Caco-2 (cell line): ENCODE measurements at regions of chr11 and their contacts with region 1.

Region 1: DNA sequence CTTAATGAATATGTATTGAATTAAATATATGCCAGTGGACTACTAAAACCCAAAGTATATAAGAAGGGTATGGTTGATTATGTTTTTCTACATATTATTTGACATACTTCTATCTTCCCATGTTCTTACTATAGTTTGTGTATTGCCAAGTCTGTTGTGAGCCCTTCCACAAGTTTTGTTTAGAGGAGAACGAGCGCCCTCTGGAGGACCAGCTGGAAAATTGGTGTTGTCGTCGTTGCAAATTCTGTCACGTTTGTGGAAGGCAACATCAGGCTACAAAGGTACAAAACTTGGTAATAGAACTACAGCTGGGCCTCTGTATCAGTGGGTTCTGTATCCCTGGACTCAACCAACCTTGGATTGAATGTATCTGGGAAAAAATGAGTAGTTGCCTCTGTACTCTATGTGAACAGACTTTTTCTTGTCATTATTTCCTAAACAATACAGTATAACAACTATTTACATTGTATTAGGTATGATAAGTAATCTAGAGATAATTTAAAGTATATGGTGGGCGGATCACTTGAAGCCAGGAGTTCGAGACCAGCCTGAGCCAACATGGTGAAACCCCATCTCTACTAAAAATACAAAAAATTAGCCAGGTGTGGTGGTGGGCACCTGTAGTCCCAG is 38.7 kb upstream of the TTC36 start:
- DNase-seq: peak; percentile 76 to 84
- H3K4me3 ChIP-seq: no peak overlapping the region
- H3K4me3 Mint-ChIP-seq: no peak overlapping the region
- H3K27ac Mint-ChIP-seq: no peak overlapping the region
- H3K4me1 ChIP-seq: no peaks in the 10 kb centered on the region
- H3K4me1 Mint-ChIP-seq: no peaks in the 10 kb centered on the region
- H3K27me3 ChIP-seq: no peaks in the 10 kb centered on the region
- H3K27me3 Mint-ChIP-seq: no peaks in the 10 kb centered on the region
- CTCF ChIP-seq: peak; percentile 97

Region 2: DNA sequence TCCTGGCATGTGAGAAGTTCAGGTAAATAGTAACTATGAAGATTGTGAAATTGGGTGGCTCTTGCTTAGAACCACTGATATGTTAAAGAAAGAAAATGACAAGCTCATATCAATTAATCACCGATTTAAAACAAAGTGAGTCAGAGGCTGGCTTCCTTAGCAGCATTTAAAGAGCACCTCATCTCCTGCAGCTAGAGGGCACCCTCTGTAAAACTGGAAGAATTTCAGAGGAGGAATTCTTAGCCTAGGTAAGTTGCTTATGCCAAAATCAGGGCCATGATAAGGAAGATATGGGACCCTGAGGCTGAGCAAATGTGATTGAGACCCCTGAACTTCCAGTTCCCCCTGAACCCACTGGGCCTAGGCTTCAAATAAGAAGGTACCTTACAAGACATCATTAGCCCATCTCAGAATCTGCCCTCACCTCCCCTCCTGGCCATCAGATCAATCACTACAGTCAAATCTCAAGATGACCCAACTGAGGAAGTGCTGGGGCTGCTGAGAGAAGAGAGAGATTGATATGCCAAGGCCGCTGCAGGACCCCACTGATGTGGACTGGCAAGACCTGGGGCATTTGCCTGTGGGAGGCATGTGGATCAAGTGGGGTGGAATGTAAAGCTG is 192.7 kb before region 1 on chr11:
- CTCF ChIA-PET with region 1: no interaction called
- POLR2A ChIA-PET with region 1: no interaction called
- intact Hi-C with region 1: loop called (anchors 2 kb)
- DNase-seq: peak; percentile 63 to 69
- H3K4me3 ChIP-seq: no peak overlapping the region
- H3K4me3 Mint-ChIP-seq: no peak overlapping the region
- H3K27ac Mint-ChIP-seq: peak overlapping the region; percentile 14
- H3K4me1 ChIP-seq: peaks cover 9% of the 10 kb centered on the region
- H3K4me1 Mint-ChIP-seq: peaks cover 18% of the 10 kb centered on the region
- H3K27me3 ChIP-seq: no peaks in the 10 kb centered on the region
- H3K27me3 Mint-ChIP-seq: no peaks in the 10 kb centered on the region
- CTCF ChIP-seq: peak; percentile 73 to 86

Region 3: DNA sequence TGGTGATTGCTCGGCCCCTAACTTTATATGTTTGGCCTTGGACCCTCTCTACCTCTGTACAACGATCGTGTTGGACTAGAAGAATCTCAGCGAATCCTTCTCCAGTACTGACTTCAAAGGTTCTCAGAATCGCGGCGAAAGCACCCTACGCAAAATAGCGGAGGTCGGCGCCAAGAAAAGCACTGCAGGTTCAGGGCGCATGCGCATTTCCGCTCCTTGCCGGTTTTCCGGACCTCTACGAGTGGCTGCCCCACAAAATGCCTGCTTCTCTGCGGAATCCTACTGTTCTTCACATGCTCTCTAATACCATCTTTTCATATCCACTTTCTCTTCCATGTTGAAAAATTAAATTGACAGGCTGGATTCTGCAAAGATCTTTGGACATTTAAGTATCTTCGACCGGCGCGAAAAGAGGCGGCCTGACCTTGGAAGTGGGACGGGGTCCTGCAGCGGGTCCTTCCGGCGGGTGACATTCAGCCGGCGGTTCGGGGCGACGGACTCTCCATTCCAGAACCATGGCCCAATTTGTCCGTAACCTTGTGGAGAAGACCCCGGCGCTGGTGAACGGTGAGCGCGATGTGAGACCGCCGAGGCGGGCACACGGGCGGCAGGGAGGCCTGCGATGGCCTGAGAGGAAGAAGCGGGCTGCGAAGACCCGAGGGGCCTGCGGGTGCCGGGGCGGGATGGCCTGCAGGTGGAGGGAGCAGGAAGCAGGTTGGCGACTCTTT is 87.3 kb before region 1 on chr11 and contains the start of gene ATP5MG:
- CTCF ChIA-PET with region 1: interaction called, 5 read pairs
- POLR2A ChIA-PET with region 1: no interaction called
- intact Hi-C with region 1: loop called (anchors 1 kb)
- DNase-seq: peak; percentile 94 to 95
- H3K4me3 ChIP-seq: peak within 1 kb of the TSS; percentile 69
- H3K4me3 Mint-ChIP-seq: peak within 1 kb of the TSS; percentile 91
- H3K27ac Mint-ChIP-seq: peak within 1 kb of the TSS; percentile 95
- H3K4me1 ChIP-seq: peaks cover 12% of the 10 kb centered on the region
- H3K4me1 Mint-ChIP-seq: peaks cover 39% of the 10 kb centered on the region
- H3K27me3 ChIP-seq: no peaks in the 10 kb centered on the region
- H3K27me3 Mint-ChIP-seq: no peaks in the 10 kb centered on the region
- CTCF ChIP-seq: peak in 1 of 2 experiments; percentile 60
- total RNA-seq, gene ATP5MG: 537 and 576 TPM in 2 replicates

Region 4: DNA sequence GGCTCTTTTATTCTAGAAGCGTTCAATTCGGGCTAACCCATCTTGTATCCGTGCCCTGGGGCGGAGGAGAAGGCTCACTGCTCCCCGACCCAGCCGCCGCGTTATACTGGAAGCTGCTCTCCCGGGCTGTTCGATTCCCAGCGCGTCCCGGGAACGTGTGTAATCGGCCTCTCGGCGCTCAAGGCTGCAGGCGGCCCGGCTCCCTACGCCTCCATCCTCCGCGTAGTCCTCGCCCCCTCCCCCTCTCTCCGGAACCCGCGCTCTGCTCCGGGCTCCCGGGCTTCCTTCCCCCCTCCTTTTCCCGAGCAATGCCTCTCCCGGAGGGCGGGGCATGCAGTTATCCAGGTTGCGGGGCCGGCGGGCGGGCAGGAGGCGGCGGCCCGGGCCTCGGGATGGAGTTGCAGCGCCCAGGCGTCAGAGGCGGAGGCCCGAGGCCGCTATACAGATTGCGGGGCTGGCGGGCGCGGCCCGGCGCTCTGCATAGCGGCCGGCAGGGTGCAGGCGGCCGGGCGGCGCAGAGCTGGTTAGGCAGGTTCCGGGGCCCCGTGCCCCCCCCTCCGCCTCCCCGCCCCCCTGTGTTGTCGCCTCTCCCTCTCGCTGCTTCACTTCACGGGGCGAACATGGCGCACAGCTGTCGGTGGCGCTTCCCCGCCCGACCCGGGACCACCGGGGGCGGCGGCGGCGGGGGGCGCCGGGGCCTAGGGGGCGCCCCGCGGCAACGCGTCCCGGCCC is 52.5 kb before region 1 on chr11 and contains the start of gene KMT2A:
- CTCF ChIA-PET with region 1: no interaction called
- POLR2A ChIA-PET with region 1: no interaction called
- intact Hi-C with region 1: loop called (anchors 1 kb)
- DNase-seq: peak; percentile 100
- H3K4me3 ChIP-seq: peak within 1 kb of the TSS; percentile 97
- H3K4me3 Mint-ChIP-seq: peak within 1 kb of the TSS; percentile 82
- H3K27ac Mint-ChIP-seq: peak within 1 kb of the TSS; percentile 88
- H3K4me1 ChIP-seq: peaks cover 24% of the 10 kb centered on the region
- H3K4me1 Mint-ChIP-seq: peaks cover 27% of the 10 kb centered on the region
- H3K27me3 ChIP-seq: no peaks in the 10 kb centered on the region
- H3K27me3 Mint-ChIP-seq: no peaks in the 10 kb centered on the region
- CTCF ChIP-seq: peak in 1 of 2 experiments; percentile 15
- total RNA-seq, gene KMT2A: 93.9 and 107 TPM in 2 replicates

Region 5: DNA sequence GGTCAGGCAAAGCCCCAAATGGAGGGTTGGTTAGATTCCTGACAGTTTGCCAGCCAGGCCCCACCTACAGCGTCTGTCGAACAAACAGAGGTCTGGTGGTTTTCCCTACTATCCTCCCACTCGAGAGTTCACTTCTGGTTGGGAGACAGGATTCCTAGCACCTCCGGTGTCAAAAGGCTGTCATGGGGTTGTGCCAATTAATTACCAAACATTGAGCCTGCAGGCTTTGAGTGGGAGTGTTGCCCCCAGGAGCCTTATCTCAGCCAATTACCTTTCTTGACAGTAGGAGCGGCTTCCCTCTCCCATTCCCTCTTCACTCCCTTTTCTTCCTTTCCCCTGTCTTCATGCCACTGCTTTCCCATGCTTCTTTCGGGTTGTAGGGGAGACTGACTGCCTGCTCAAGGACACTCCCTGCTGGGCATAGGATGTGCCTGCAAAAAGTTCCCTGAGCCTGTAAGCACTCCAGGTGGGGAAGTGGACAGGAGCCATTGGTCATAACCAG is 34.0 kb after region 1 on chr11:
- CTCF ChIA-PET with region 1: no interaction called
- POLR2A ChIA-PET with region 1: no interaction called
- intact Hi-C with region 1: loop called (anchors 2 kb)
- DNase-seq: peak; percentile 75 to 81
- H3K4me3 ChIP-seq: no peak overlapping the region
- H3K4me3 Mint-ChIP-seq: no peak overlapping the region
- H3K27ac Mint-ChIP-seq: peak overlapping the region; percentile 26
- H3K4me1 ChIP-seq: 0 out of 2 replicates have a peak, but pooled peaks cover 5% of the 10 kb centered on the region
- H3K4me1 Mint-ChIP-seq: peaks cover 7% of the 10 kb centered on the region
- H3K27me3 ChIP-seq: no peaks in the 10 kb centered on the region
- H3K27me3 Mint-ChIP-seq: no peaks in the 10 kb centered on the region
- CTCF ChIP-seq: peak; percentile 87 to 90

Region 6: DNA sequence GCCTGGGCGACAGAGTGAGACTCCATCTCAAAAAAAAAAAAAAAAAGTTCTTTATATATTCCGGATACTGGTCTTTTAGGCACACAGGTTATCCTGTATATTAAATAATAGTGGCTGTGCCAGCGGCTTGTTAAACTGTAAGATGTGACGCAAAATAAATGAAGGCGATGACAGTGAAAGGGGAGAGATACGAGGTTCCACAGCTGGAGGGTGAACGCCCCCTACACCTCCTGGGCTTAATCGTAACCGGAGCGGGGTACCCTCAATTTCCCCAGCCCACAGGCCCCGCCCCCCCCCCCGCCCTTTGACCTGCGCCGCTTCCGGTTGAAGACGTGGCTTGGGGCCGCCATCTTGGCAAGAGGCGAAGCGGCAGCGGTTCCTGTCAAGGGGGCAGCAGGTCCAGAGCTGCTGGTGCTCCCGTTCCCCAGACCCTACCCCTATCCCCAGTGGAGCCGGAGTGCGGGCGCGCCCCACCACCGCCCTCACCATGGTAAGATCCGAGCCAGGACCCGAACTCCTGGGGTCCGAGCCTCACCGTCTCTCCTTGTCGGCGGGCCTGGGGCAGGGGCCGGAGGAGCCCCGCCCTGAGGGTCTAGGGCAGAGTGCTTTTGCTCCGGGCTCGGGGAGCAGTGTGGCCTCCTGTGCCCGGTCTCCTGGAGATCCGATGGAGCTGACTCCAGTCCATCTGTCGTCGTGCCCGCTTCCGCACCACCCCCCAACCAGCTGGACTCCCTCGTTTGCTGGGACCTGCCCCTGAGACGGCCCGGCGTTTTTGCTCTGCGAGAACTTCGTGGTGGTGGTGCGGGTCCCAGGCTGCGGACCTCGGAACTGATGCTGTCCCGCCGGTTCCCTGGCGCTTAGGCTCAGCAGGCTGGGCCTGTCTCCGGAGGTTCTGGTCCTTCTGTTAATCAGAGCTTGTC is 83.7 kb after region 1 on chr11 and contains the start of gene ARCN1:
- CTCF ChIA-PET with region 1: interaction called, 4 read pairs
- POLR2A ChIA-PET with region 1: no interaction called
- intact Hi-C with region 1: loop called (anchors 2 kb)
- DNase-seq: peak; percentile 89
- H3K4me3 ChIP-seq: peak within 1 kb of the TSS; percentile 87
- H3K4me3 Mint-ChIP-seq: peak within 1 kb of the TSS; percentile 80
- H3K27ac Mint-ChIP-seq: peak within 1 kb of the TSS; percentile 72
- H3K4me1 ChIP-seq: peaks cover 18% of the 10 kb centered on the region; the same call in 1 of the 2 replicates
- H3K4me1 Mint-ChIP-seq: peaks cover 12% of the 10 kb centered on the region
- H3K27me3 ChIP-seq: no peaks in the 10 kb centered on the region
- H3K27me3 Mint-ChIP-seq: no peaks in the 10 kb centered on the region
- CTCF ChIP-seq: no peak
- total RNA-seq, gene ARCN1: 313 and 330 TPM in 2 replicates